Caco-2 (cell line): ENCODE measurements at regions of chr2 and their contacts with region 1.

Region 1: GRCh38 chr2:101151141-101151858 is at the start of gene TBC1D8:
- DNase-seq: peak; percentile 92
- H3K4me3 ChIP-seq: peak within 1 kb of the TSS; percentile 86
- H3K4me3 Mint-ChIP-seq: peak within 1 kb of the TSS; percentile 57
- H3K27ac Mint-ChIP-seq: peak within 1 kb of the TSS; percentile 4
- H3K4me1 ChIP-seq: peaks cover 15% of the 10 kb centered on the region
- H3K4me1 Mint-ChIP-seq: peaks cover 42% of the 10 kb centered on the region
- H3K27me3 ChIP-seq: no peaks in the 10 kb centered on the region
- H3K27me3 Mint-ChIP-seq: no peaks in the 10 kb centered on the region
- CTCF ChIP-seq: no peak
- total RNA-seq, gene TBC1D8: 29.3 and 29.5 TPM in 2 replicates

Region 2: DNA sequence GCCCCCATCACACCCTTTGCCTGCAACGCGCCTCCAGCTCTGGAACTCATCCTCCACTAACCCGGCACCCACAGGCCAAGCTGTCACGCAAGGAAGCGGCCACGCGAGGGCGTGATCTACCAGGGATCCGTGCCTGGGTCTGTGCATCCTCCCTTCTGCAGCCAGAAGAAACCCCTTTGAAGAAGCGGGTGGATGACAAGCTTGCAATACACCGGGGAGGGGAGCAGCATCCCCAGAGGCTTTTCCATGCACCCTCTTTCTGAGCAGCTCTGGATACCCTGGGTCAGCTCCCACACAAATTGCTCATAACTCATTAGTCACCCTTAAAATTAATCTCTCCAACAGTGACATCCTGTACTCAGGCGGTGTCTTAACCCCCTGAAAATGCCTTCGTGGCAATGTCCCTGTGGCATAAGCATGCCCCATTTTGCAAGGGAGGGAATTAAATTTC is 540.9 kb before region 1 on chr2:
- CTCF ChIA-PET with region 1: no interaction called
- POLR2A ChIA-PET with region 1: no interaction called
- intact Hi-C with region 1: loop called (anchors 5 kb)
- DNase-seq: peak; percentile 74 to 79
- H3K4me3 ChIP-seq: no peak overlapping the region
- H3K4me3 Mint-ChIP-seq: no peak overlapping the region
- H3K27ac Mint-ChIP-seq: no peak overlapping the region
- H3K4me1 ChIP-seq: no peaks in the 10 kb centered on the region
- H3K4me1 Mint-ChIP-seq: no peaks in the 10 kb centered on the region
- H3K27me3 ChIP-seq: no peaks in the 10 kb centered on the region
- H3K27me3 Mint-ChIP-seq: peaks cover 12% of the 10 kb centered on the region
- CTCF ChIP-seq: peak; percentile 71 to 74

Region 3: DNA sequence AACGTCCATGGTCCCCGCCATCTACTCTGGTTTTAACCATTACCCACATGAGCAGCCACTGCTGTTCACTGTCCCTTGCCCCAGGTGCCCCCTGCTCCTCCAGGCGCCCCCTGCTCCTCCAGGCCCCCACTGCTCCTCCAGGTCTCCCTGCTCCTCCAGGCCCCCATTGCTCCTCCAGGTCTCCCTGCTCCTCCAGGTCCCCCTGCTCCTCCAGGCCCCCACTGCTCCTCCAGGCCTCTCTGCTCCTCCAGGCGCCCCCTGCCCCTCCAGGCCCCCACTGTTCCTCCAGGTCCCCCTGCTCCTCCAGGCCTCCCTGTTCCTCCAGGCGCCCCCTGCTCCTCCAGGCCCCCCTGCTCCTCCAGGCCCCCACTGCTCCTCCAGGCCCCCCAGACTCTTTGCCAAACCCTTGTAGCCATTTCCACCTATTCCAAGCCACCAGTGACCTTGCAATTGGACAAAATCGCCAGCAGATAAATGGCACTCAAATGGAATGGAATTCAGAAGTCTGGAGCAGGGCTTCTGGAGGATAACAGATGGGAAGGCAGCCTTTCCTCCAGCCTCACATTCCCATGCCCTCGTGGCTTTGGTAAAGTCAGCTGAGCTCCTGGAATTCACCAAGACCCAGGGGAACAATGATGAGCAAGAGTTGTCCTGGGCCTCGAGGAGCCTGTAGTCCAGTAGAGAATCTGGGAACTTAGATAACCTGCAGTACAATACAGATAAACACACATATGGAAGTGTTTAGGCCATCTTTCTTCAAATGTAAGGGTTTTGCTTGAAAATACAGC is 162.5 kb before region 1 on chr2:
- CTCF ChIA-PET with region 1: no interaction called
- POLR2A ChIA-PET with region 1: no interaction called
- intact Hi-C with region 1: no loop called
- DNase-seq: no peak
- H3K4me3 ChIP-seq: no peak overlapping the region
- H3K4me3 Mint-ChIP-seq: no peak overlapping the region
- H3K27ac Mint-ChIP-seq: no peak overlapping the region
- H3K4me1 ChIP-seq: peaks cover 5% of the 10 kb centered on the region; the same call in 1 of the 2 replicates
- H3K4me1 Mint-ChIP-seq: no peaks in the 10 kb centered on the region
- H3K27me3 ChIP-seq: no peaks in the 10 kb centered on the region
- H3K27me3 Mint-ChIP-seq: no peaks in the 10 kb centered on the region
- CTCF ChIP-seq: no peak

Region 4: DNA sequence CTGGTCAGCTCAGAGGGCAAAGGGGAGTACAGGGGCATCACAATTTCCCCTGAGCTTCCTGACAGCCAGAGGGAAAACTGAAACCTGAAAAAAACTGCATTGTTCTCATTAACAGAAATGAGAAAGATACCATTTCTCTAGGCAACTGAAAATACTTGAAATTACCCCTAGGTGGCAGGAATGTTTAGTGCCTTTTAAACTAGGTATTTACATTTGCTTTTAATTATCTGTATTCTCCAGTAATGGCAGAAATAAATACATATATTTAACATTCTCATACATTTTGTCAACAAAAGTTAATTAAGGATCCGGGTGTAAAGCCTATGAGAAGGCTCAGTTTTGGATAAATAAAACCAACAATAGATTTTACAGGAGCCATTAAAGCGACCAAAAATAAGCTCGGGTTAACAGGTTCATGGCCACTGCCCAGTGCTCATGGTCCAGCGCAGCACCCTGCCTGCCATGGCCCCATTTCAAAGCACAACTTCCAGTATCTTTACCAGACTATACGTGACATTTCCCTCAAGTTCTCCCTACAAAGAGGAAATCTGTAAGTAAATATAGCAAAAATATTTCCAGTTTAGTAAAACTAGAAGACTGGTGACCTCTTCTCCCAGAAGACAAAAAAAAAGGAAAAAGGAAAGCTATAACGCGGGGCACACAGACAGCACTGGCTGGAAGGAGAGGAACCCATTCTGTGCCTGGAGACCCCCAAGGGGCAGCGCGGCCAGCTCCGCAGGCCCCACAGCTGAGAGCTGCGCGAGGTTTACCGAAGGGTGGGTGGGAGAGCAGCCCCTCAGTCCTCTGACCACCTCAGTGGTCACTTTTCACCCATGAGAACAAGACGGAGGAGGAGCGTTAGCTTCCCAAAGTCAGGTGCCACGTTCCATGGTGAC is 114.5 kb before region 1 on chr2:
- CTCF ChIA-PET with region 1: interaction called, 26 read pairs
- POLR2A ChIA-PET with region 1: no interaction called
- intact Hi-C with region 1: loop called (anchors 1 kb)
- DNase-seq: peak in 1 of 2 experiments; percentile 29
- H3K4me3 ChIP-seq: no peak overlapping the region
- H3K4me3 Mint-ChIP-seq: no peak overlapping the region
- H3K27ac Mint-ChIP-seq: peak overlapping the region; percentile 6
- H3K4me1 ChIP-seq: no peaks in the 10 kb centered on the region
- H3K4me1 Mint-ChIP-seq: peaks cover 7% of the 10 kb centered on the region
- H3K27me3 ChIP-seq: no peaks in the 10 kb centered on the region
- H3K27me3 Mint-ChIP-seq: no peaks in the 10 kb centered on the region
- CTCF ChIP-seq: peak; percentile 46 to 67

Region 5: DNA sequence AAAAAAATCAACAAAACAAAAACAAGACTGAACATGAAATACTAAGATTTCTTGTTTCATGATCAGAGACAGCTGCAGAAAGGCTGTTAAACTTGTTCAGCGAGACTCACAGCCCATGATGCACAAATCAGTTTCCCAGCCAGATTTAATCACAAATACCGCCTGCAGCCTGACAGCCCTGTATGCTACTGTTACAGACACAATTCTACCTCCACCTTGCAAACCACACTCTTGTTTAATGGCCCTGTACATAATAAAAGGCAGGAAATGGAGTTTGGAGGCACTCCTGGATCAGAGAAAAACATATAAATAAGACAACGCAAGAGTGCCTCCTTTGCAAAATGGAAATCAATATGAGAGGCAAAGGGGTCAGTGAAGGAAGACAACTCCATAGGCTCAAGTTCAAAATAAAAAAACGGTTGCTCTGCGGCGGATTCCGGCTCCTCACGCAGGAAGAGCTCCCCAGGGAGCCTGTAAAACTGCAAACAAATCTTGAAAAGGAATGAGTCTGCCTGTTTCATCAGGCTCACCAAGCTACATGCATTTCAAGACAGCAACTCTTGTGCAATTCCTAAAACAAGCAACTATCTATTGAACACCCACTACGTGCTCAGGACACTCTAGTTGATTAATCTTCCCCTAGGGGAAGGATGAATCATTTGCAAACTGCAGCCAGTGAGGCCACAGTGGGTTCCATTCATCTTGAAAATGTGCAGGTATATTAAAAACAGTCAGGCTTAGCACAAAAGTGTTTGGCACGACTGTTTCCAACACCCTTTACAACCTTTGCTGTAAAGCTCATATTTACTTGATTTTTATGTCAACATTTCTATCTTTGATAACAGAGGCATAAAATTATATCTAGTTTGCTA is 37.7 kb before region 1 on chr2:
- CTCF ChIA-PET with region 1: no interaction called
- POLR2A ChIA-PET with region 1: no interaction called
- intact Hi-C with region 1: loop called (anchors 2 kb)
- DNase-seq: peak in 1 of 2 experiments; percentile 32
- H3K4me3 ChIP-seq: no peak overlapping the region
- H3K4me3 Mint-ChIP-seq: peak overlapping the region; percentile 8
- H3K27ac Mint-ChIP-seq: peak overlapping the region; percentile 33
- H3K4me1 ChIP-seq: peaks cover 31% of the 10 kb centered on the region
- H3K4me1 Mint-ChIP-seq: peaks cover 32% of the 10 kb centered on the region
- H3K27me3 ChIP-seq: no peaks in the 10 kb centered on the region
- H3K27me3 Mint-ChIP-seq: no peaks in the 10 kb centered on the region
- CTCF ChIP-seq: no peak

Region 6: GRCh38 chr2:101205521-101205998 is 54.3 kb after region 1 on chr2:
- CTCF ChIA-PET with region 1: interaction called, 8 read pairs
- POLR2A ChIA-PET with region 1: no interaction called
- intact Hi-C with region 1: loop called (anchors 1 kb)
- DNase-seq: peak; percentile 68
- H3K4me3 ChIP-seq: no peak overlapping the region
- H3K4me3 Mint-ChIP-seq: no peak overlapping the region
- H3K27ac Mint-ChIP-seq: no peak overlapping the region
- H3K4me1 ChIP-seq: peaks cover 25% of the 10 kb centered on the region
- H3K4me1 Mint-ChIP-seq: peaks cover 17% of the 10 kb centered on the region
- H3K27me3 ChIP-seq: no peaks in the 10 kb centered on the region
- H3K27me3 Mint-ChIP-seq: no peaks in the 10 kb centered on the region
- CTCF ChIP-seq: peak; percentile 35 to 71

Region 7: DNA sequence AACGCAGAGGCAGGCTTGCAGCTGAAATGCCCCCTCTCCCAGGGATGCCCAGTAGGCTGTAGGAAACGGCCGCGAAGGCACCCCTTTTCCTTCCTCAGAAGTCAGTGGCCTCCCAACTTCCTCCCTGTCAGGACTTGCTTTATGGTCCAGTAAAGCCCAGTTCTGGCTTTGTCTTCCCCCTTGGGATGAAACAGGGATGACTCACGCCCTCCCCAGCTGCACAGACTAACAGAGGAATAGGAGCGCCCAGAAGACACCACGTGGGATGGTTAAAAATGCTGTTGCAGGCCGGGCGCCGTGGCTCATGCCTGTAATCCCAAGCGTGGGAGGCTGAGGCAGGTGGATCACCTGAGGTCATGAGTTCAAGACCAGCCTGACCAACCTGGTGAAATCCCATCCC is 229.1 kb after region 1 on chr2:
- CTCF ChIA-PET with region 1: no interaction called
- POLR2A ChIA-PET with region 1: no interaction called
- intact Hi-C with region 1: no loop called
- DNase-seq: no peak
- H3K4me3 ChIP-seq: no peak overlapping the region
- H3K4me3 Mint-ChIP-seq: no peak overlapping the region
- H3K27ac Mint-ChIP-seq: no peak overlapping the region
- H3K4me1 ChIP-seq: peaks cover 4% of the 10 kb centered on the region; the same call in 1 of the 2 replicates
- H3K4me1 Mint-ChIP-seq: peaks cover 7% of the 10 kb centered on the region
- H3K27me3 ChIP-seq: no peaks in the 10 kb centered on the region
- H3K27me3 Mint-ChIP-seq: no peaks in the 10 kb centered on the region
- CTCF ChIP-seq: no peak